Left cardiac atrium (tissue), 4 donors: ENCODE measurements at regions of chr18 and their contacts with region 1.

Region 1: GRCh38 chr18:9683407-9684396 is 24.4 kb upstream of the RAB31 start:
- DNase-seq: no peak
- ATAC-seq: peak; percentile 80 to 82

Region 2: GRCh38 chr18:9743200-9744016 is 59.7 kb after region 1 on chr18:
- intact Hi-C with region 1: no loop called
- DNase-seq: peak; percentile 36
- ATAC-seq: peak in 1 of 2 donors; percentile 62

Region 3: DNA sequence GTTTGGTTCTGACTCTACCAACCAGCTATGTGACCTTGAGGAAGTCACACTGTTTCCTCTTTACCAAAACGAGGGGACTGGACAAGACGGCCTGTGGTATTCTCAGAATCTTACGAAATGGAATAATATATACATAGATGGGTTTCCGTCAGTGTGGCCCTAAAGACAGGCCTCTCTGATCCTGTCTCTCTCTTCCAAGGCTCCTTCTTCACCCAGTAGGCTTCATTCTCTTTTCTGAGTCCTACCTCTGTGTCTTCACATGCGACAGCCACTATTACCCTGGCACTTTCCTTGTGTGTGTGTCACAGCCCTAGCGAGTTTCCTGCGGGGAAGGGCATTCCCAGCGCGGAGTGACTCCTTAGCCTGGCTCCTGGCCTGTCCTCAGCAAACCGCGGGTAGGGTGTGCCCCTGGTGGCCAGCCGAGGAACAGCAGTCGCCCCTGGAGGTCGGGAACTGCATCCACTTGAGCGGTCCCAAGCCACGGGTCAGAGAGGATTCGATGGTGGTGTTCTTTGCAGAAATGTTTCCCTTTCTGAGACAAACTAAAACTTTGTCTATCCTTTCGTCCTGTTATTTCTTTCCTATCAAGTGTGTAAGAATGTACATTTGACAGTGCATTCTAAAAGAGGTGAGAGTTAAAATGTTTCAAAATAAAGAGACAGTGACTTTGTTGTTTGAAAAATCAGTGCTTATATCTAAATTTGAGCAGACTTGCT is 87.7 kb after region 1 on chr18:
- intact Hi-C with region 1: loop called in 1 of 2 experiments (anchors 10 kb)
- DNase-seq: peak; percentile 88
- ATAC-seq: peak; percentile 93 to 96